ENCODE measurements at regions of chr1 and their contacts with region 1.

Region 1: GRCh38 chr1:43358746-43359693 is at the start of gene CDC20:
- DNase-seq: peak; percentile 91 to 98 (median 96)
- ATAC-seq: peak; percentile 99
- H3K4me3 ChIP-seq: peak within 1 kb of the TSS; percentile 76
- H3K4me3 Mint-ChIP-seq: peak within 1 kb of the TSS; percentile 85
- H3K27ac ChIP-seq: peak within 1 kb of the TSS in 1 of 2 donors; percentile 37
- H3K27ac Mint-ChIP-seq: peak within 1 kb of the TSS; percentile 87
- H3K4me1 ChIP-seq: peaks cover 15% of the 10 kb centered on the region
- H3K4me1 Mint-ChIP-seq: peaks cover 19% of the 10 kb centered on the region
- H3K27me3 ChIP-seq: no peaks in the 10 kb centered on the region
- H3K27me3 Mint-ChIP-seq: no peaks in the 10 kb centered on the region
- CTCF ChIP-seq: no peak
- total RNA-seq, gene CDC20: 1.1 to 1.8 TPM

Region 2: GRCh38 chr1:42846257-42847110 is 512.5 kb before region 1 on chr1 and contains the start of gene ZNF691:
- CTCF ChIA-PET with region 1: no interaction called
- POLR2A ChIA-PET with region 1: no interaction called
- intact Hi-C with region 1: loop called in 1 of 2 experiments (anchors 10 kb)
- DNase-seq: peak; percentile 73 to 96 (median 82)
- ATAC-seq: peak; percentile 98
- H3K4me3 ChIP-seq: peak within 1 kb of the TSS; percentile 96
- H3K4me3 Mint-ChIP-seq: peak within 1 kb of the TSS; percentile 94
- H3K27ac ChIP-seq: peak within 1 kb of the TSS in 1 of 2 donors; percentile 56
- H3K27ac Mint-ChIP-seq: peak within 1 kb of the TSS; percentile 67
- H3K4me1 ChIP-seq: peaks cover 19% of the 10 kb centered on the region
- H3K4me1 Mint-ChIP-seq: peaks cover 38% of the 10 kb centered on the region
- H3K27me3 ChIP-seq: no peaks in the 10 kb centered on the region
- H3K27me3 Mint-ChIP-seq: no peaks in the 10 kb centered on the region
- CTCF ChIP-seq: peak; percentile 47
- total RNA-seq, gene ZNF691: 1.2 to 1.7 TPM

Region 3: DNA sequence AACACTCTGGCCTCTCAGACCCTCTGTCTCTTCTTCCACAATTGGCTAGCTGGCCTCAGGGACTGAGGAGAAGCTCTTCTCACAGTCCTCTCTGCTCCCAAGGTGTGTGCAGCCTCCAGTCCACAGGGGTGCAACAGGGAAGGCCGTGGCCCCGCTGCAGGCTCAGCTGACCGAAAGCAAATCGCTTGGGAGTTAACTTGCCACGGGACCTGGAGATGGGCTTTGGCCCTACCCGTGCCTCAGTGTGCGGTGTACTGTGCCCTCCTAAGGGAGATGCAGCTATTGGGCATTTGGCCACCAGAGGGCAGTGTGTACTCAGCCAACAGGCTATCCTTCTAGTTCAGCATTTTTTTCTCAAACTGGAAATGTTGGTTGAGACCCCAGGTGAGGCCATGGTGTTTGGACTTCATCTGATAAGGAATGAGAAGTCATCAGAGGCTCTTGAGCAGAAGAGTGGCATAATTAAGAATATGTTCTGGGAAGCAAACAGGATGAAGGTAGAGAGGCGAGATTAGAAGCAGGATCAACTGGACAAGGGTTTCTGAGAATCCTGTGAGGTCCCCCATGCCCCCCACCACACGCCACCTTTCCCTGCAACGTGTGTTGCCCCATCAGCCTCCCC is 131.8 kb before region 1 on chr1:
- CTCF ChIA-PET with region 1: interaction called, 3 read pairs
- POLR2A ChIA-PET with region 1: interaction called, 6 read pairs
- intact Hi-C with region 1: loop called in 1 of 2 experiments (anchors 1 kb)
- DNase-seq: peak; percentile 73 to 91 (median 84)
- ATAC-seq: peak; percentile 89
- H3K4me3 ChIP-seq: no peak overlapping the region
- H3K4me3 Mint-ChIP-seq: no peak overlapping the region
- H3K27ac ChIP-seq: no peak overlapping the region
- H3K27ac Mint-ChIP-seq: no peak overlapping the region
- H3K4me1 ChIP-seq: peaks cover 3% of the 10 kb centered on the region
- H3K4me1 Mint-ChIP-seq: no peaks in the 10 kb centered on the region
- H3K27me3 ChIP-seq: no peaks in the 10 kb centered on the region
- H3K27me3 Mint-ChIP-seq: no peaks in the 10 kb centered on the region
- CTCF ChIP-seq: peak; percentile 89

Region 4: GRCh38 chr1:43348809-43349583 is 10.0 kb before region 1 on chr1:
- CTCF ChIA-PET with region 1: no interaction called
- POLR2A ChIA-PET with region 1: interaction called, 14 read pairs
- intact Hi-C with region 1: no loop called
- DNase-seq: peak; percentile 35 to 89 (median 49)
- ATAC-seq: peak; percentile 85
- H3K4me3 ChIP-seq: peak overlapping the region; percentile 48
- H3K4me3 Mint-ChIP-seq: peak overlapping the region; percentile 68
- H3K27ac ChIP-seq: peak overlapping the region; percentile 55 to 72
- H3K27ac Mint-ChIP-seq: peak overlapping the region; percentile 89
- H3K4me1 ChIP-seq: peaks cover 8% of the 10 kb centered on the region
- H3K4me1 Mint-ChIP-seq: peaks cover 22% of the 10 kb centered on the region
- H3K27me3 ChIP-seq: no peaks in the 10 kb centered on the region
- H3K27me3 Mint-ChIP-seq: no peaks in the 10 kb centered on the region
- CTCF ChIP-seq: no peak

Region 5: GRCh38 chr1:43448955-43449701 is 90.1 kb after region 1 on chr1:
- CTCF ChIA-PET with region 1: no interaction called
- POLR2A ChIA-PET with region 1: interaction called, 7 read pairs
- intact Hi-C with region 1: loop called in 1 of 2 experiments (anchors 1 kb)
- DNase-seq: peak in 1 of 14 experiments; percentile 9
- ATAC-seq: no peak
- H3K4me3 ChIP-seq: no peak overlapping the region
- H3K4me3 Mint-ChIP-seq: peak overlapping the region; percentile 11
- H3K27ac ChIP-seq: no peak overlapping the region
- H3K27ac Mint-ChIP-seq: no peak overlapping the region
- H3K4me1 ChIP-seq: peaks cover 10% of the 10 kb centered on the region
- H3K4me1 Mint-ChIP-seq: peaks cover 12% of the 10 kb centered on the region
- H3K27me3 ChIP-seq: no peaks in the 10 kb centered on the region
- H3K27me3 Mint-ChIP-seq: no peaks in the 10 kb centered on the region
- CTCF ChIP-seq: no peak

Region 6: GRCh38 chr1:43611950-43612349 is 252.9 kb after region 1 on chr1:
- CTCF ChIA-PET with region 1: no interaction called
- POLR2A ChIA-PET with region 1: no interaction called
- intact Hi-C with region 1: no loop called
- DNase-seq: no peak
- ATAC-seq: no peak
- H3K4me3 ChIP-seq: no peak overlapping the region
- H3K4me3 Mint-ChIP-seq: no peak overlapping the region
- H3K27ac ChIP-seq: no peak overlapping the region
- H3K27ac Mint-ChIP-seq: no peak overlapping the region
- H3K4me1 ChIP-seq: no peaks in the 10 kb centered on the region
- H3K4me1 Mint-ChIP-seq: no peaks in the 10 kb centered on the region
- H3K27me3 ChIP-seq: no peaks in the 10 kb centered on the region
- H3K27me3 Mint-ChIP-seq: no peaks in the 10 kb centered on the region
- CTCF ChIP-seq: no peak

Region 7: DNA sequence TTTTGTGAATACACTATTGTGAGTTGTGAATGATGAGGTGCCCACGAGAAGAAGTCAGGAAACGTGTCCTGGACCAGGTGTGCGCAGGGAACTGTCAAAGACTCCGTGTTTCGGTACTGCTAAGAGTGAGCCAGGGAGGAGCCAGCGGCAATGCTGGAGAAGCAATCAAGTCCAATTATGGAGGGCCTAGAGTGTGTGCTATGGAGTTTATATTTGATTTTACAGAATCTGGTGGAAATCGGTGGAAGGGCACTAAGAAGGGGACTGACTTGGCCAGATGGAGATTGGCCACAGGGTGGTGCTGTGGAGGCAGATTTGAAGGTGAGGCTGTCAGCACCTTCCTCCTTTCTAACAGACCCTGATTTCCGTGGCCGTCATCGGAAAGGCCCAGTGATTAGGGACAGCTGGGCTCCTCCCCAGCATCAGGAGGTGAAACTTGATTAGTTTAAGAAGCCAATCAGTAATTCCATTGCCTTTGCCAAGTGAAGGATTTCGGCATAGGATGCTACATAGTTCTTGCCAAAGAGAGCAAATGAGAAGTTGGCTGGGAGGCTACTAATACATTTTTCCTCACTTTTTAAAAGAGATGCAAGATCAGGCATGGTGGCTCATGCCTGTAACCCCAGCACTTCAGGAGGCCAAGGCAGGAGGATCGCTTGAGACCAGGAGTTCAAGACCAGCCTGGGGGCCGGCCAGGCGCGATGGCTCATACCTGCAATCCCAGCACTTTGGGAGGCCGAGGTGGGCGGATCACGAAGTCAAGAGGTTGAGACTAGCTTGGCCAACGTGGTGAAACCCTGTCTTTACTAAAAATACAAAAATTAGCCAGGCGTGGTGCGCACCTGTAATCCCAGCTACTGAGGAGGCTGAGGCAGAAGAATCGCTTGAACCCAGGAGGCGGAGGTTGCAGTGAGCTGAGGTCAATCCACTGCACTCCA is 1477.0 kb after region 1 on chr1:
- CTCF ChIA-PET with region 1: no interaction called
- POLR2A ChIA-PET with region 1: no interaction called
- intact Hi-C with region 1: no loop called
- DNase-seq: peak; percentile 77 to 93 (median 84)
- ATAC-seq: peak; percentile 98
- H3K4me3 ChIP-seq: no peak overlapping the region
- H3K4me3 Mint-ChIP-seq: no peak overlapping the region
- H3K27ac ChIP-seq: no peak overlapping the region
- H3K27ac Mint-ChIP-seq: no peak overlapping the region
- H3K4me1 ChIP-seq: peaks cover 9% of the 10 kb centered on the region
- H3K4me1 Mint-ChIP-seq: peaks cover 8% of the 10 kb centered on the region
- H3K27me3 ChIP-seq: no peaks in the 10 kb centered on the region
- H3K27me3 Mint-ChIP-seq: peaks cover 11% of the 10 kb centered on the region
- CTCF ChIP-seq: peak; percentile 91